ENCODE measurements at regions of chr20 and their contacts with region 1.

Region 1: DNA sequence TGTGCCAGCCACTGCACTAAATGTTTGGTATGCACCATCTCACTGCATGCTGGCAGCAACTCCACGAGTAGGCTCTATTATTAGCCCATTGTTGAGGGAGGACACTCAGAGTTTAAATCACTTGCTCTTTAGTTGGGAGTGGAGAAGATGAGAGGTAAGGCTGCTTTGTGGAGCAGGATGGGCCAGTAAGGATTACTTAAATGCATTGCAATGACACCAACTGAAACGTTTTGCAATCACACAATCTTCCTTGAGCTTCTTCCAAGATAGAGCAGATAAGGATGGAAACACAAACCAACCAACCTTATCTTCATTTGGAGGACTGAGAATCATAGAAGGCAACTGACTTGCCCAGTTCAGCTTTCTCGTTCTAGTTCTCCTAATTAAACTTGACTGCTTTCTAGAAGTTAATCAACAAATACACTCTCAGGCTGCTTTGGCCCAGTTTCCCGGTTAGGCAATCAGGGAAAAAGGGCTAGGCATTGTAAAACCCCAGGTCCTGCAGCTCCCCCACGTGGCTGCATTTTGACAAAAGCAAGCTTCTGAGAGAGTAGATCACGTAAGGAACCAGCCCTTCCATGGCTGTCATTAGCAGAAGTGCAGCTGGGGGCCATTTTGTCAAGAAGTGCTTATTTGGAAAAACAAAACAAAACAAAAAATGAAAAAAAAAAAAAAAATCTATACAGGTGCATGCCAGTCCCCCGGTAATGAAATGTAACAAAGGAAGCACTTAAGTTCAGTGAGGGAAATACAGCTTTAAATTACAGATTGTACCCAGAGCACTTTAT is 130.6 kb downstream of the BCAS1 start:
- DNase-seq: peak; percentile 38 to 83 (median 67)
- ATAC-seq: peak; percentile 76
- H3K4me3 ChIP-seq: no peak overlapping the region
- H3K4me3 Mint-ChIP-seq: no peak overlapping the region
- H3K27ac ChIP-seq: no peak overlapping the region
- H3K27ac Mint-ChIP-seq: no peak overlapping the region
- H3K4me1 ChIP-seq: peaks cover 31% of the 10 kb centered on the region
- H3K4me1 Mint-ChIP-seq: peaks cover 43% of the 10 kb centered on the region
- H3K27me3 ChIP-seq: no peaks in the 10 kb centered on the region
- H3K27me3 Mint-ChIP-seq: no peaks in the 10 kb centered on the region
- CTCF ChIP-seq: peak; percentile 75

Region 2: GRCh38 chr20:53419693-53420460 is 519.9 kb before region 1 on chr20:
- CTCF ChIA-PET with region 1: interaction called, 3 read pairs
- POLR2A ChIA-PET with region 1: no interaction called
- intact Hi-C with region 1: loop called in 1 of 2 experiments (anchors 5 kb)
- DNase-seq: no peak
- ATAC-seq: no peak
- H3K4me3 ChIP-seq: no peak overlapping the region
- H3K4me3 Mint-ChIP-seq: no peak overlapping the region
- H3K27ac ChIP-seq: no peak overlapping the region
- H3K27ac Mint-ChIP-seq: no peak overlapping the region
- H3K4me1 ChIP-seq: no peaks in the 10 kb centered on the region
- H3K4me1 Mint-ChIP-seq: no peaks in the 10 kb centered on the region
- H3K27me3 ChIP-seq: no peaks in the 10 kb centered on the region
- H3K27me3 Mint-ChIP-seq: no peaks in the 10 kb centered on the region
- CTCF ChIP-seq: no peak